CD14-positive monocyte (primary cell): ENCODE measurements at regions of chr12 and their contacts with region 1.

Region 1: DNA sequence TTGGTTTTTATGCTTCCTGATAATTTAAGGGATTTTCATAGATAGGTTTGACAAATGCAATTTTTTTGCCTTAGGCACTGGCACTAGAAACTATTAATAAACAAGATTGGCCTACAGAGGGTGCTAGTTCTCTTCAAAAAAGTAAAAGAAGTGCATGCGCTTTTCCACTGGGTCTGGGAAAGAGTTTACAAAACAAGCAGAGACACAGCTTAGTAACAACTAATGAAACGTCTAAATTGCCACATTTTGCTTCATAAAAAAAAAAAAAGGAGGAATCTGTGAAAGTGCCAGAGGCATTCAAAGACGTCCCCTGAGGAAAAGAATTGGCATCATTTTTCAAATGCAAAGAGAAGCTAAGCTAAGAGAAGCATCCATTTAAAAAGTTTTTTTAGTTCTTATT is 58.3 kb upstream of the EEA1 start:
- DNase-seq: peak; percentile 64 to 79 (median 69)
- H3K4me3 ChIP-seq: peak overlapping the region; percentile 1 to 64 (median 36)
- H3K4me3 Mint-ChIP-seq: peak overlapping the region; percentile 67 to 81
- H3K27ac ChIP-seq: peak overlapping the region; percentile 86 to 91
- H3K27ac Mint-ChIP-seq: peak overlapping the region; percentile 95 to 99 (median 98)
- H3K4me1 ChIP-seq: peaks cover 20 to 21% of the 10 kb centered on the region in 2 donors
- H3K4me1 Mint-ChIP-seq: peaks cover 20% of the 10 kb centered on the region
- H3K27me3 ChIP-seq: no peaks in the 10 kb centered on the region
- H3K27me3 Mint-ChIP-seq: peaks cover 0 to 4% (median 1%) of the 10 kb centered on the region in 3 donors
- CTCF ChIP-seq: peak; percentile 81

Region 2: DNA sequence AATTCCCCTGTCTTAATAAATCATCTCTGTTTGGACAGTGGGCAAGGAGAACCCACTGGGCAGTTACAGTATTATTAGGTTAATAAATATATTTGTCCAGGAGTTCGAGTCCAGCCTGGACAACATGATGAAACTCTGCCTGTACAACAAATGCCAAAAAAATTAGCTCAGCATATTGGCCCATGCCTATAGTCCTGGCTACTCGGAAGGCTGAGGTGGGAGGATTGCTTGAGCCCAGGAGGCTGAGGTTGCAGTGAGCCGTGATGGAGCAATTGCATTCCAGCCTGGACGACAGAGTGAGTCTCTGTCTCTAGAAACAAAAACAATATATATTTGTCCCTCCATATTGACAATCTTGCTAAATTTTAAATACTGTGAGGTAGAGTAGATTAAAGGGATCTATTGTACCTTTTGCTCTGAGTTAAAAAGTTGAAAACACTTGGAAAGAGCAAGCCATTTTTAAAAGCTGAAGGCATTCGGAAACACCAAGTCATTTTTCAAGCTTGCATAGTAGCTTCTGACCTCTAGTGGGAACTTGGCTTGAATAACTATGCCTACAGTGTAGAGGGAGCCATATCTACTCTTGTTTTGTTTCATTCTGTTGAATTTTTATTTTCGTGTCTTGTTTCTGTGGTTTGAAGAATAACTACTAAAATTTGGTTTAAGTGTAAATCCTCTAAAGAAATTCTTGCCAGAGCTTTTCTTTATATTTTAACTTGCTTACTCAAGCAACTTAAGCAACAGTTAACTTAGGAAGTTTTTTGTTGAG is 43.7 kb before region 1 on chr12:
- intact Hi-C with region 1: no loop called
- DNase-seq: no peak
- H3K4me3 ChIP-seq: no peak overlapping the region
- H3K4me3 Mint-ChIP-seq: no peak overlapping the region
- H3K27ac ChIP-seq: no peak overlapping the region
- H3K27ac Mint-ChIP-seq: no peak overlapping the region
- H3K4me1 ChIP-seq: peaks cover 0 to 8% of the 10 kb centered on the region in 2 donors
- H3K4me1 Mint-ChIP-seq: peaks cover 5% of the 10 kb centered on the region
- H3K27me3 ChIP-seq: no peaks in the 10 kb centered on the region
- H3K27me3 Mint-ChIP-seq: peaks cover 0 to 3% (median 0%) of the 10 kb centered on the region in 3 donors
- CTCF ChIP-seq: no peak

Region 3: DNA sequence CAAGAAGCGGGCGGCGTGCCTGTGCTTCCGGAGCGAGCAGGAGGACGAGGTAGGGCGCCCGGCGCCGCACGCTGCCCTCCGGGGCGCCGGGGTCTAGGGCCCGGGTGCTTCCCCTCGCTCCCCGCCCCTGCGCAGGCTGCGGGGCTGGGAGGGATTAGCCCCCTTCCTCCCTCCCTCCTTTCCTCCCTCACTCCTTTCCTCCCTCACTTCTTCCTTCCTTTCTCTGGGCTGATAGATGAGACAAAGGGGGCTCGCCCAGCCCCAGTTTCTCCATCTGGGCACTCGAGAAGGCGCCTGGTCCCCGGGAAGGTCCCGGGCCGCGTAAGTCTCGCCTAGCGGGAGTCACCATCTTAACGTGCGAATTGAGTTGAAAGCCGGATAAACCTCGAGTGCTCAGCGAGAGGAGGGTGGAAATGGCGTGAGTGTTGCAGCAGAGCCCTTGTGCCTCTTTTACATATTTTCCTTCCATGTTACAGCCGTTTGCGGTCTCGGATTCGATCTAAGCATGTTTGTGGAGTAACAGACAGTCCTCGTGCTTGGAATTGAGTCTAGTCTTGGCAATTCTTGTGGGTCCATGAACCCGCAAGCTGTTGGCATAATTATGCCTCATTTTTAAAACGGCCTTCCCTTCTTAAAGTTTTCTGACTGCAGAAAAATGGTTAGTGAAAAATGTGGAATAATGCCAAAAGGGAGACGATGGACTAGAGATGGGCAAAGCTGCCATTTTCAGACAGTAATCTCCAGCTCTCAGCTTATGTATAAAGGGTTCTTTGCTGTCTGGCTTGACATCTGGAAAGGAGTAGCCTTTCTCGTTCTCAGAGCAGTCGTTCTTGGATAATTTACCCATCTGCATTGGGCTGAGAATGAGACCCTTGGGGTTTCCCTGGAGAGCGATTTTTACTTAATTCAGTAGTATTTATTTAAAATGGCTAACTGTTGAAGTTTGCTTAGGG is 391.3 kb after region 1 on chr12:
- intact Hi-C with region 1: loop called in 1 of 2 experiments (anchors 5 kb)
- DNase-seq: peak; percentile 63 to 74 (median 67)
- H3K4me3 ChIP-seq: peak overlapping the region; percentile 73 to 94 (median 92)
- H3K4me3 Mint-ChIP-seq: peak overlapping the region; percentile 97 to 100
- H3K27ac ChIP-seq: peak overlapping the region; percentile 92 to 94
- H3K27ac Mint-ChIP-seq: peak overlapping the region; percentile 93 to 98 (median 96)
- H3K4me1 ChIP-seq: peaks cover 65 to 69% of the 10 kb centered on the region in 2 donors
- H3K4me1 Mint-ChIP-seq: peaks cover 65% of the 10 kb centered on the region
- H3K27me3 ChIP-seq: no peaks in the 10 kb centered on the region
- H3K27me3 Mint-ChIP-seq: no peaks in the 10 kb centered on the region
- CTCF ChIP-seq: no peak

Region 4: DNA sequence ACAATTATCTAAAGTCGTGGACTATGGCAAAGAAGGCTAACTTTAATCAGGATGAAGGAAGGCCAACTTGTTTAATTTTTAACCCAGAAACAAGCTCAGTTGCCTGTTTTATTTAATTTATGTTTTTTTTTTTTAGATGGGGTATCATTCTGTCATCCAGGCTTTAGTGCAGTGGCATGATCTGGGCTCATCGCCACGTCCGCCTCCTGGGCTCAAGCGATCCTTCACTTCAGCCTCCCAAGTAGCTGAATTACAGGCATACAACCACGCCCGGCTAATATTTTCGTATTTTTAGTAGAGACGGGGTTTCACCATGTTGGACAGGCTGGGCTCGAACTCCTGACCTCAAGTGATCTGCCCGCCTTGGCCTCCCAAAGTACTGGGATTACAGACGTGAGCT is 410.1 kb after region 1 on chr12:
- intact Hi-C with region 1: loop called in 1 of 2 experiments (anchors 5 kb)
- DNase-seq: no peak
- H3K4me3 ChIP-seq: no peak overlapping the region
- H3K4me3 Mint-ChIP-seq: no peak overlapping the region
- H3K27ac ChIP-seq: no peak overlapping the region
- H3K27ac Mint-ChIP-seq: no peak overlapping the region
- H3K4me1 ChIP-seq: no peaks in the 10 kb centered on the region
- H3K4me1 Mint-ChIP-seq: no peaks in the 10 kb centered on the region
- H3K27me3 ChIP-seq: no peaks in the 10 kb centered on the region
- H3K27me3 Mint-ChIP-seq: no peaks in the 10 kb centered on the region
- CTCF ChIP-seq: no peak